WTC11 (cell line): ENCODE measurements at regions of chr7 and their contacts with region 1.

Region 1: GRCh38 chr7:45259966-45260646 is 102.5 kb downstream of the RAMP3 start:
- DNase-seq: peak; percentile 87
- ATAC-seq: peak; percentile 96
- H3K4me3 Mint-ChIP-seq: no peak overlapping the region; the same call in 1 of the 2 replicates
- H3K27ac Mint-ChIP-seq: no peak overlapping the region
- H3K4me1 Mint-ChIP-seq: peaks cover 9% of the 10 kb centered on the region
- H3K27me3 Mint-ChIP-seq: peaks cover 13% of the 10 kb centered on the region
- CTCF ChIP-seq: peak; percentile 99

Region 2: GRCh38 chr7:45146531-45147379 is 113.4 kb before region 1 on chr7:
- CTCF ChIA-PET with region 1: interaction called, 11 read pairs
- POLR2A ChIA-PET with region 1: no interaction called
- DNase-seq: no peak
- ATAC-seq: no peak; the same call in 1 of the 2 replicates
- H3K4me3 Mint-ChIP-seq: no peak overlapping the region
- H3K27ac Mint-ChIP-seq: no peak overlapping the region
- H3K4me1 Mint-ChIP-seq: no peaks in the 10 kb centered on the region
- H3K27me3 Mint-ChIP-seq: no peaks in the 10 kb centered on the region; the same call in 1 of the 2 replicates
- CTCF ChIP-seq: no peak

Region 3: GRCh38 chr7:45157653-45158401 is 102.3 kb before region 1 on chr7 and contains the start of gene RAMP3:
- CTCF ChIA-PET with region 1: interaction called, 21 read pairs
- POLR2A ChIA-PET with region 1: no interaction called
- DNase-seq: peak; percentile 42
- ATAC-seq: peak; percentile 36
- H3K4me3 Mint-ChIP-seq: peak within 1 kb of the TSS; percentile 72
- H3K27ac Mint-ChIP-seq: no peak within 1 kb of the TSS
- H3K4me1 Mint-ChIP-seq: peaks cover 13% of the 10 kb centered on the region; the same call in 1 of the 2 replicates
- H3K27me3 Mint-ChIP-seq: peaks cover 36% of the 10 kb centered on the region
- CTCF ChIP-seq: no peak
- total RNA-seq, gene RAMP3: 0.85 to 1.2 TPM (median 1.1 TPM) in 3 replicates

Region 4: DNA sequence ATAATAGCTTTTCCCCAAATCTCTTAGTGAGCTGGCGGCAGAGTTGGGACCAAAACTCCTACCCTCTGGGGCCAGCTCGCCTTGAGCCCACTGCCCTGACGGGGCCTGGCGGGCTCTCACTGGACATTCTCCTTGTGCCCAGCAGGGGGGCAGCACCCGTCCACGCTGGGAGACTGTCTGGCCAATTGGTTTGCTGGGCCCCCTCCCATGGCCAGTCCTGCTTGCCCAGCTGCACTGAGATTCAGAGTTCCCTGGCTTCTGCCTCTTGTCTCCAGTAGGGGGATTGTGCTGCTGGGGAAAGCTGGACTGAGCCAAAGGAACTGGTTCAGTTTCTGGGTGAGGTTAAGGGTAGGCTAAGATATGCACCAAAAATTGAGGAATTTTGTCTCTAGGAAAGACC is 42.7 kb before region 1 on chr7:
- CTCF ChIA-PET with region 1: interaction called, 25 read pairs
- POLR2A ChIA-PET with region 1: interaction called, 4 read pairs
- DNase-seq: peak; percentile 29
- ATAC-seq: peak; percentile 62
- H3K4me3 Mint-ChIP-seq: no peak overlapping the region
- H3K27ac Mint-ChIP-seq: no peak overlapping the region
- H3K4me1 Mint-ChIP-seq: peaks cover 18% of the 10 kb centered on the region
- H3K27me3 Mint-ChIP-seq: no peaks in the 10 kb centered on the region
- CTCF ChIP-seq: no peak

Region 5: GRCh38 chr7:45246354-45246753 is 13.8 kb before region 1 on chr7:
- CTCF ChIA-PET with region 1: interaction called, 14 read pairs
- POLR2A ChIA-PET with region 1: no interaction called
- DNase-seq: no peak
- ATAC-seq: no peak
- H3K4me3 Mint-ChIP-seq: no peak overlapping the region
- H3K27ac Mint-ChIP-seq: no peak overlapping the region
- H3K4me1 Mint-ChIP-seq: no peaks in the 10 kb centered on the region
- H3K27me3 Mint-ChIP-seq: peaks cover 8% of the 10 kb centered on the region; the same call in 1 of the 2 replicates
- CTCF ChIP-seq: no peak